ENCODE measurements at regions of chr20 and their contacts with region 1.

Region 1: GRCh38 chr20:41738604-41739206 is 120.5 kb upstream of the CHD6 start:
- DNase-seq: peak in 1 of 2 experiments; percentile 74
- H3K4me3 ChIP-seq: no peak overlapping the region
- H3K27ac ChIP-seq: no peak overlapping the region
- H3K4me1 ChIP-seq: peaks cover 0 to 3% (median under 1%) of the 10 kb centered on the region in 4 experiments; a peak in 4 of 7 replicates
- H3K27me3 ChIP-seq: no peaks in the 10 kb centered on the region
- CTCF ChIP-seq: peak; percentile 83 to 91 (median 87)
- EP300 ChIP-seq: no peak
- POLR2A ChIP-seq: no peak
- RAD21 ChIP-seq: peak; percentile 94 to 97

Region 2: DNA sequence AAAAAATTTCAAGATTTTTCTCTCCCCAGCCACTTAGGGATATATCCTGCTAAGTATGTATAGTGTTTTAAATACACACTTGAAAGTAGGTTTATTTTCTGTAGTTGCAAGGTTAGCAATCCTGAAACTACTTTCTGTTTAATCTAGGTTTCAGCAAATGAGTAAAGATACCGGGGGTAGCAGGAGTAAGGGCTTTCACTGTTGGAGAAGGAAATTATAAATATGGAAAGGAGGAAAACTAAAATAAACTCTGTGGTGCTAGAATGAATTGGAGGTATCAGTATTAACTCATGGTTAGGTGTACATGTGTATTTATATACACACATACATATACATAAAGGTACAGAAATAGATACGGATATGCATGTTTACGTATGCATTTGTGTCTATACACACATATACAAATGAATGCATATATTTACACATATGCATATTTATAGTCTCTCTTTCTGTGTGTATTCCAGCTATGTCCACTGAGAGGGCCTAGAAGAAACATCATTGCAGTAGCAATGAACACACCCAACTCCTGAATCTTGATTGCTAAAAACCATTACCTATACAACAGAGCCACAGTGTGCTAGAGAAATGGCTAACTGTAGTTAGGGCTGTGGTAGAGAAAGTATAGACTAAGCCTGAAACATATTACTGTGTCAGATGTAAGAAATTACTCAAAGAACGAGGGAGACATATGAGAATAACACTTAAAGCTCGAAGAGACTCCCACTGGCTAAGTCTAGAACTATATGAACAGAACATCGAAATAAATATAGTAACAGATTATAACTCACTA is 276.1 kb before region 1 on chr20:
- CTCF ChIA-PET with region 1: no interaction called
- POLR2A ChIA-PET with region 1: no interaction called
- DNase-seq: no peak
- H3K4me3 ChIP-seq: no peak overlapping the region
- H3K27ac ChIP-seq: no peak overlapping the region
- H3K4me1 ChIP-seq: no peaks in the 10 kb centered on the region
- H3K27me3 ChIP-seq: no peaks in the 10 kb centered on the region
- CTCF ChIP-seq: no peak
- EP300 ChIP-seq: no peak
- POLR2A ChIP-seq: no peak
- RAD21 ChIP-seq: no peak

Region 3: GRCh38 chr20:41701588-41702348 is 36.9 kb before region 1 on chr20:
- CTCF ChIA-PET with region 1: interaction called, 13 read pairs
- POLR2A ChIA-PET with region 1: no interaction called
- DNase-seq: peak in 1 of 2 experiments; percentile 46
- H3K4me3 ChIP-seq: no peak overlapping the region
- H3K27ac ChIP-seq: no peak overlapping the region
- H3K4me1 ChIP-seq: peaks cover 0 to 4% (median 1%) of the 10 kb centered on the region in 4 experiments; a peak in 3 of 7 replicates
- H3K27me3 ChIP-seq: no peaks in the 10 kb centered on the region
- CTCF ChIP-seq: no peak
- EP300 ChIP-seq: no peak
- POLR2A ChIP-seq: no peak
- RAD21 ChIP-seq: no peak

Region 4: DNA sequence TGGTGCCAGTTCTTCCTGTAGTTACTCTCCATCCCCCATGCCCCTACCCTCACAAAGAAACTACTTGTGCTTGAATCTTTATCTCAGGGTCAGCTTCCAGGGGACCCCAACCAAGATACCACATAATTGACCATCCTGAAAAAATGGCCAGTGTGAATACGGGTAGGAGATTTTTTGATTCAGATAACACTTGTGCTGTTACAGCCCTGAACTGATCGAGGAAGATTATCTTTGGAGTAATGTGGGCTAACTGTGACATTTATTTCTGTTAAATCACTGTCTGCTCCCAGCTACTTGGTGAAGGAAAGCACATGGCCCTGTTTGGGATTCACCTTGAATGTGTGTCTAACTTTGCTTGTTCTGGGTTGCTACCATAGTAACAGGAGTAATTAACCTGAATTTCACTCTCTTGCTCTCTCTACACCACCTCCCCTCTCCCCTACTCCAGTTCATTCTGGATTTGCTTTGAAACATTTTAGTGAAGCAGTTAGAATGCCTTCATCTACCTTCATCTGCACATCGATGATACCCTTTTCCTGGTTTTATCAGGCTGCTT is 99.0 kb after region 1 on chr20:
- CTCF ChIA-PET with region 1: interaction called, 11 read pairs
- POLR2A ChIA-PET with region 1: no interaction called
- DNase-seq: no peak
- H3K4me3 ChIP-seq: no peak overlapping the region
- H3K27ac ChIP-seq: no peak overlapping the region
- H3K4me1 ChIP-seq: no peaks in the 10 kb centered on the region
- H3K27me3 ChIP-seq: no peaks in the 10 kb centered on the region
- CTCF ChIP-seq: no peak
- EP300 ChIP-seq: no peak
- POLR2A ChIP-seq: no peak
- RAD21 ChIP-seq: no peak

Region 5: GRCh38 chr20:41854765-41855164 is 116.1 kb after region 1 on chr20:
- CTCF ChIA-PET with region 1: interaction called, 21 read pairs
- POLR2A ChIA-PET with region 1: no interaction called
- DNase-seq: no peak
- H3K4me3 ChIP-seq: no peak overlapping the region
- H3K27ac ChIP-seq: no peak overlapping the region
- H3K4me1 ChIP-seq: peaks cover 0 to 3% (median 2%) of the 10 kb centered on the region in 4 experiments; a peak in 3 of 7 replicates
- H3K27me3 ChIP-seq: no peaks in the 10 kb centered on the region
- CTCF ChIP-seq: no peak
- EP300 ChIP-seq: no peak
- POLR2A ChIP-seq: no peak
- RAD21 ChIP-seq: no peak

Region 6: GRCh38 chr20:41889126-41889870 is 150.6 kb after region 1 on chr20:
- CTCF ChIA-PET with region 1: interaction called, 22 read pairs
- POLR2A ChIA-PET with region 1: no interaction called
- DNase-seq: no peak
- H3K4me3 ChIP-seq: no peak overlapping the region
- H3K27ac ChIP-seq: no peak overlapping the region
- H3K4me1 ChIP-seq: peaks cover 0 to 15% (median 5%) of the 10 kb centered on the region in 4 experiments; a peak in 6 of 7 replicates
- H3K27me3 ChIP-seq: no peaks in the 10 kb centered on the region
- CTCF ChIP-seq: peak in 2 of 3 experiments; percentile 21 to 38; a peak in 1 of 4 replicates
- EP300 ChIP-seq: no peak
- POLR2A ChIP-seq: no peak
- RAD21 ChIP-seq: peak; percentile 53 to 59

Region 7: GRCh38 chr20:42018951-42019350 is 280.2 kb after region 1 on chr20:
- CTCF ChIA-PET with region 1: interaction called, 17 read pairs
- POLR2A ChIA-PET with region 1: no interaction called
- DNase-seq: no peak
- H3K4me3 ChIP-seq: no peak overlapping the region
- H3K27ac ChIP-seq: no peak overlapping the region
- H3K4me1 ChIP-seq: no peaks in the 10 kb centered on the region
- H3K27me3 ChIP-seq: no peaks in the 10 kb centered on the region
- CTCF ChIP-seq: peak; percentile 40 to 73 (median 54)
- EP300 ChIP-seq: no peak
- POLR2A ChIP-seq: no peak
- RAD21 ChIP-seq: peak; percentile 68 to 69

Measured in H1 (cell line).